Aorta (tissue), 5 donors: ENCODE measurements at regions of chr20 and their contacts with region 1.

Region 1: DNA sequence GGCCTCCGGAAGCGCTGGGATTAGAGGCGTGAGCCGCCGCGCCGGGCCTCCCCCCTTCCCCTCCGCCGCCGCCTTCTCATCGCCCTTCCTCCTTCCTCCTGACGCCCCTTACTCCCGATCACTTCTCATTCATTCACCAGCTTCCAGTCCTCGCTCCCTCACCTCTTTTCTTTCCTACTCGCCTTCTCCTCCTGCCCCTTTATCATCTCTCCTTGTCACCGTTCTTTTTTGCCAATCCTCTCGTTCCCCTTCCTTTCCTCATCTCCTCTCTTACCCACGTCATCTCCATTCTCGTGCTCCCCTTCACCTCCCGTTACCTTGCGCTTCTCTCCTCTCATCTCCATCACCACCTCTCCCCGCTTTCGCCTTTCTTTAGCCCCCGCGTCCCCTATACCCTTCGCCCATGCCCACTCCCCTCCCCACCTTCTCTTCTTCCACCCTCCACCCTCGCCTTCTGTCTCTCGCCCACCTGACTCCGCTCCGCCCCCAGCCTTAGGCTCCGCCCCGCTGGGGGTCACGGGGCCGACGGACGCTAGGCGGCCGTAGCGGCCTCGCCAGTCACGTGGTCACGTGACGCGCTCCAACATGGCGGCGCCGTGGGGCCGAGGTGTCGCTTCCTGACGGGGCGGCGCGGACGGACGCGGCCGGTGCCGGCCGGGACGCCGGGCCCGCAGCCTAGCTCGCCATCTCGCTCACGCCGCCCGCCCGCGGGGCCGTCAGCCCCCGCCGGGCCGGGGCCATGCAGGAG is at the start of gene ARFGEF2:
- DNase-seq: peak; percentile 95 to 97
- ATAC-seq: peak; percentile 97
- H3K4me3 ChIP-seq: peak within 1 kb of the TSS; percentile 60 to 96
- H3K27ac ChIP-seq: peak within 1 kb of the TSS; percentile 78 to 82
- H3K4me1 ChIP-seq: peaks cover 0 to 4% of the 10 kb centered on the region in 2 donors
- H3K27me3 ChIP-seq: no peaks in the 10 kb centered on the region
- total RNA-seq, gene ARFGEF2: 29.0 to 30.2 TPM

Region 2: DNA sequence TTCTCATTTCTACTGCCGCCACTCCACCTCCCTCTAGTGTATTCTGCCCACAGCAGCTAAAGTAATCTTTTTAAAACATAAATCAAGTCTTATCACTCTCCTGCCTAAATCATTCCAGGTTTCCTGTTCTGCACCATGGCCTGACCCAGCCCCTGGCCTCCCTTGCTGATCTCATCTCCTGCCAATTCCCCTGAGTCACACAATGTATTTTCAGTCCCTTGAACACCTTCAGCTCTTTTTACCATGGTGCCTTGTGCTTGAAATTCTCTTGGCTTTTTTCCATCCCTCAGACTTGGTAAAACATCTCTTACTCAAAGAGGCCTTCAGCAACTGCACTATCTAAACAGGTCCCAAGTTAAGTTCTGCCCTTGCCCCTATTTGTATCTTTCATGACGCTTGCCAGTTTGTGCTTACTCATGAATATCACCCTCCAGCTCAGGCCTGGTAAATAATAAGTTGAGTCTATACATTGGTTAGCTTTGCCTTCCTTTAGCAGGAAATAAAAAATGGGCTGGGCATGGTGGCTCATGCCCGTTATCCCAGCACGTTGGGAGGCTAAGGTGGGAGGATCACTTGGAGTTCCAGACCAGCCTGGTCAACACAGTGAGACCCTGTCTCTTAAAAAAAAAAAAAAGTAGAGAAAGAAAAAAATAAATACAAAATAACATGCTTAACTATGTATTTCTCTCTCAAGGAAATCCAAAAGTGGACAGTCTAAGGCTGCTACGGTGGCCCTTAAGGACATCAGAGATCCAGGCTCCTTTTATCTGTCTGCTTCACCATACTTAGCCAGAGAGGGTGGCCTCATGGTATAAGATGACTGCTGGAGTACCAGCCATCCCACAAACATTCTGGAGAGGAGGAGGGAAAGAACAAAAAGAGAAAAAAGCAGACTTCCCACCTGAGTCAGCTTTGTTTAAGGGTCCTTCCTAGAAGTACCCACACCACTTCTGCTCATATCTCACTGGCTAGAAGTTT is 62.4 kb after region 1 on chr20:
- intact Hi-C with region 1: loop called in 1 of 2 experiments (anchors 5 kb)
- DNase-seq: no peak
- ATAC-seq: no peak
- H3K4me3 ChIP-seq: no peak overlapping the region
- H3K27ac ChIP-seq: peak overlapping the region in 1 of 2 donors; percentile 8
- H3K4me1 ChIP-seq: peaks cover 0 to 3% of the 10 kb centered on the region in 2 donors
- H3K27me3 ChIP-seq: no peaks in the 10 kb centered on the region